ENCODE measurements at regions of chr12 and their contacts with region 1.

Region 1: DNA sequence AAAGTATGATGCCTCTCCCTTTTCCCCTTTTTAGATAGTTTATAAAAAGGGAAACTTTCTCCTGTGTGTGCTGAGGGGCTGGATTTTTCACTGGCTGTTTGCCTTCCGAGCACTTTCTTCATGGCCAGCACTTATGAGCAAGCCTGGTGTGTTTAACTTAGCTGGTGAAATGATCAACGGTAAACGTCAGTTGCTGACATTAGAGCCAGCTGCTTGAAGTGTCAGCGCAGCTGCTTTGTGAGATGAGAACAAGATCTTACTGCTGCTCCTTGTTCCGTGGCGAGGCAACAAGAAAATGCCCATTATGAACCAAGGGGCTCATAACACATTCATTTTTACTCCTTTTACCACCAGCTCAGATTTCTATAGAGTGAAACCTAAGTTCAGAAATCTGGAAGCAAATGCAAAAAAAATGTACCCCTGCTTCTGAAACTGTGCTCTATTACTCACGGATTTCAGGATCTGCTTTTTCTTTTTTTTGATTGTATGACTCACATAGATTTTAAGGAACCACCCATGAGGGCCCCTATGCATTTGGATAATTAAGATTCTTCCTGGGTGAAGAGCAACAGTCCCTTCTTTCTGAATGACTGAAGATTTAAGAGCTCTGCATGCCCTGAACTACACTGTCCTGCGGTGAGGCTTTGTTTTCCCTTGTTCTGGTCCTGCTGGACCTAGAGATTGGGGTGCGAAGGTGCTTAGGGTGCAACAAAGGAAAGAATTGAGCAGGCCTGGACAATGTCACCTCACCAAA is 74.3 kb upstream of the CPM start:
- DNase-seq: peak; percentile 97
- ATAC-seq: peak; percentile 89
- H3K4me3 ChIP-seq: peak overlapping the region; percentile 35
- H3K27ac ChIP-seq: peak overlapping the region; percentile 99
- H3K4me1 ChIP-seq: peaks cover 17% of the 10 kb centered on the region
- H3K27me3 ChIP-seq: no peaks in the 10 kb centered on the region
- CTCF ChIP-seq: no peak
- POLR2A ChIP-seq: no peak
- RAD21 ChIP-seq: no peak

Region 2: GRCh38 chr12:69052613-69053408 is 45.5 kb after region 1 on chr12:
- CTCF ChIA-PET with region 1: interaction called, 3 read pairs
- POLR2A ChIA-PET with region 1: no interaction called
- dilution Hi-C with region 1: no loop called
- in situ Hi-C with region 1: no loop called
- intact Hi-C with region 1: loop called (anchors 2 kb)
- DNase-seq: peak; percentile 83
- ATAC-seq: peak; percentile 84
- H3K4me3 ChIP-seq: no peak overlapping the region
- H3K27ac ChIP-seq: peak overlapping the region; percentile 24; the same call in 1 of the 2 replicates
- H3K4me1 ChIP-seq: peaks cover 15% of the 10 kb centered on the region
- H3K27me3 ChIP-seq: no peaks in the 10 kb centered on the region
- CTCF ChIP-seq: 0 out of 2 replicates have a peak, but pooled peaks have one; percentile 11
- POLR2A ChIP-seq: no peak
- RAD21 ChIP-seq: no peak